ENCODE measurements at regions of chr11 and their contacts with region 1.

Region 1: DNA sequence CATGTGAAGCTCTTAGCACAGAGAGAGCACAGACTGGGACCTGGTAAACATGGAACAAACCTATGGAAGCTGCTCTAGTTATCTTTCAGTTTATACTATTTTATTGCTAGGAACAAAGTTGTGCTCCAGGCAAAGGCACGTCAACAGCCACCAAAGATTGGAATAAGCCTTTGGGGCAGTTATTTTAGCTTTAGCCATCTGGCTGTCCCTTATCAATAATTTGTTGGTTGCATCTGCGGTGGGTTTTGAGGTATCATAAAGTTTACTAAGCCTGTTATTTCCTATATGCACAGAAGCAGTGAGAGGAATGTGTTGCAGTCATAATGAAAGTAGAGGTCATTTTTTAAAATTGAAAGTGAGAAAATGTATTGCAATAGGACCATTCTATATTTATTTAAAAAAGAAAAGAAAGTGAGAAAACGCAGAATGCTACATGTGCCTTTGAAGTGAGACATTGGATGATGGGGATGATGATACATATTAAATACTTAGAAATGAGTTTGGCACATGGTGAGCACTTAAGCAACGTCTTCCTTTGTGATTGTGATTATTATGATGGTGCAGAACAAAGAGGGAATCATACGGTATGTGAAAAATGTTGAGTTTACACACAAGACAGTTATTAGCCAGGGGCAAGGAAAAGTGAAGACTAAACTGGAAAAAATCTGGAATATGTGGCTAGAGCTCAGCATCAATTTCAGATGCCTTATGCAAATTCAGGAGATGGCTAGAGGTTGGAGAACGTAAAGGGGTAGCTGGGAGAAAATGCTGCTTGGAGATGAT is 58.3 kb downstream of the PRR5L start:
- DNase-seq: no peak
- H3K4me3 Mint-ChIP-seq: peak overlapping the region; percentile 1
- H3K27ac Mint-ChIP-seq: peak overlapping the region; percentile 15
- H3K4me1 Mint-ChIP-seq: peaks cover 65% of the 10 kb centered on the region
- H3K27me3 Mint-ChIP-seq: peaks cover 3% of the 10 kb centered on the region

Region 2: DNA sequence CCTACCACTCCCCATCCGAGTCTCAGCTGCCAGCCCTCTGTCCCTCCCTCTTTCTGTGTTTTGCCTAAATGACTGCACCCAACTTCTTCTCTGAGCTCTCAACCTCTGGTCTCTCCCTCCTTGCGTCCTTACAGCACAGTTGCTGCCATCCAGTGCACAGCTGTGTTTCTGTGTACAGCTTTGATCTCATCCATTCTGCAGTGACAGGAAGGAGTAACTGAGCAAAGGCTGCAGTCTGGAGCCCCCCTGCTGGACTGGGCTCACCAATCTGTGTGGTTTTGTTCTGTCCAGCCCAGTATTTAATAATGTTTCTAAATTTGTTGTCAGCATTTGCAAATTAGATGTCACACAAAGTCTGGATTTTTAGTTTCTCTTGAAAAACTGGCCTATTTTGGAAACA is 14.5 kb before region 1 on chr11:
- intact Hi-C with region 1: loop called (anchors 1 kb)
- DNase-seq: no peak
- H3K4me3 Mint-ChIP-seq: no peak overlapping the region
- H3K27ac Mint-ChIP-seq: no peak overlapping the region
- H3K4me1 Mint-ChIP-seq: peaks cover 16% of the 10 kb centered on the region
- H3K27me3 Mint-ChIP-seq: peaks cover 44% of the 10 kb centered on the region

Region 3: DNA sequence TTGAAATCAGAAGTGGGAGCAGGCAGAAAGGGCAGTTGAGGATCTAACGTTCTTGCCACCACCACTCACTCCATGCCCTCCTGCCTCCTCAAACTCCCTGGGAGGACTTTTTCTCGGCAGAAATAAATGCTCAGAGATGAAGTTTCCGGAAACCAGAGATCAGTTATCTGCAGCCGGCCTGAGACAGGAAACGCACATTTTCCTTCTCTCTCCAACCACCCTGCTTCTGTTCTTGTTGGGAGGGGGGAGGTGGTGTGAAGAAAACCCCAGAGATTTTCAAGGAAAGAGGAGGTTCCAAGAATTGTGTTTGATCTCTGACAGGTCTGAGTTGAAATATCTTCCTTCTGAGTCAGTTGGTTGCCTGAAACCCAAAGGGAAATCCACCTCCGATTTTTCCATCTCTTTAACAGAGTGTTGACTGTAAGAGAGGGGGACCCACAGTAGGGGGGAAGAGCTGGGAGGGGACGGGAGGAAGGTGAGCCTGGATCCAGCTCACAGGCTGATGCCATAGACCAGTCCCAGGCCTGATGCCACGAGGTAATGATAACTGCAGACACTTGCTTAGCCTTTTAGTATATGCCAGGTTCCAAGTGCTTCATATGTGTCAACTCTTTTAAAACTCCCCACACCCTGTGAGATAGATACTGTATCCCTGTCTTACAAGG is 54.9 kb after region 1 on chr11:
- intact Hi-C with region 1: loop called (anchors 1 kb)
- DNase-seq: peak; percentile 14
- H3K4me3 Mint-ChIP-seq: peak overlapping the region; percentile 18
- H3K27ac Mint-ChIP-seq: peak overlapping the region; percentile 76
- H3K4me1 Mint-ChIP-seq: peaks cover 56% of the 10 kb centered on the region
- H3K27me3 Mint-ChIP-seq: no peaks in the 10 kb centered on the region

Region 4: DNA sequence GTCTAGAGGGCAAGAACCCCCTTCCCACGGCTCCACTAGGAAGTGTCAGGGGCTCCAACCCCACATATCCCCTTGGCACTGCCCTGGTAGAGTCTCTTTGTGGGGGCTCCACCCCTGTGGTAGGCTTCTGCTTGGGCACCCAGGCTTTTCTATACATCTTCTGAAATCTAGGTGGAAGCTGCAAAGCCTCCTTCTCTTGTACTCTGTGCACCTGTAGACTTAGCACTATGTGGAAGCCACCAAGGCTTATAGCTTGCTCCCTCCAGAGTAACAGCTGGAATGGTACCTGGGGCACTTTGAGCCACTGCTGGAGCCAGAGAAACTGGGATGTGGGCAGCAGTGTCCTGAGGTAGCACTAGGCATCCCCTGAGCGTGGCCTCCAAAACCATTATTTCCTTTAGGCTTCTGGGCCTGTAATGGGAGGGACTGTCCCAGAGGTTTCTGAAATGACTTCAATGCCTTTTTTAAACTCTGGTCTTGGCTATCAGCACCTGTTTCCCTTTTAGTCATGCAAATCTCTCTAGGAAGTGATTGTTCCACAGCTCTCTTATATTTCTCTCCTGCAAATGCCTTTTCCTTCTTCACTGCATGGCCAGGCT is 87.3 kb after region 1 on chr11:
- intact Hi-C with region 1: loop called (anchors 2 kb)
- DNase-seq: no peak
- H3K4me3 Mint-ChIP-seq: no peak overlapping the region
- H3K27ac Mint-ChIP-seq: no peak overlapping the region
- H3K4me1 Mint-ChIP-seq: peaks cover 11% of the 10 kb centered on the region
- H3K27me3 Mint-ChIP-seq: peaks cover 24% of the 10 kb centered on the region

Region 5: GRCh38 chr11:36478700-36479329 is 124.4 kb after region 1 on chr11:
- intact Hi-C with region 1: loop called (anchors 1 kb)
- DNase-seq: no peak
- H3K4me3 Mint-ChIP-seq: no peak overlapping the region
- H3K27ac Mint-ChIP-seq: no peak overlapping the region
- H3K4me1 Mint-ChIP-seq: peaks cover 9% of the 10 kb centered on the region
- H3K27me3 Mint-ChIP-seq: peaks cover 4% of the 10 kb centered on the region

Region 6: GRCh38 chr11:36558571-36559413 is 204.4 kb after region 1 on chr11:
- intact Hi-C with region 1: loop called (anchors 5 kb)
- DNase-seq: no peak
- H3K4me3 Mint-ChIP-seq: peak overlapping the region; percentile 60
- H3K27ac Mint-ChIP-seq: peak overlapping the region; percentile 60
- H3K4me1 Mint-ChIP-seq: peaks cover 28% of the 10 kb centered on the region
- H3K27me3 Mint-ChIP-seq: peaks cover 24% of the 10 kb centered on the region